ENCODE measurements at regions of chr1 and their contacts with region 1.

Region 1: DNA sequence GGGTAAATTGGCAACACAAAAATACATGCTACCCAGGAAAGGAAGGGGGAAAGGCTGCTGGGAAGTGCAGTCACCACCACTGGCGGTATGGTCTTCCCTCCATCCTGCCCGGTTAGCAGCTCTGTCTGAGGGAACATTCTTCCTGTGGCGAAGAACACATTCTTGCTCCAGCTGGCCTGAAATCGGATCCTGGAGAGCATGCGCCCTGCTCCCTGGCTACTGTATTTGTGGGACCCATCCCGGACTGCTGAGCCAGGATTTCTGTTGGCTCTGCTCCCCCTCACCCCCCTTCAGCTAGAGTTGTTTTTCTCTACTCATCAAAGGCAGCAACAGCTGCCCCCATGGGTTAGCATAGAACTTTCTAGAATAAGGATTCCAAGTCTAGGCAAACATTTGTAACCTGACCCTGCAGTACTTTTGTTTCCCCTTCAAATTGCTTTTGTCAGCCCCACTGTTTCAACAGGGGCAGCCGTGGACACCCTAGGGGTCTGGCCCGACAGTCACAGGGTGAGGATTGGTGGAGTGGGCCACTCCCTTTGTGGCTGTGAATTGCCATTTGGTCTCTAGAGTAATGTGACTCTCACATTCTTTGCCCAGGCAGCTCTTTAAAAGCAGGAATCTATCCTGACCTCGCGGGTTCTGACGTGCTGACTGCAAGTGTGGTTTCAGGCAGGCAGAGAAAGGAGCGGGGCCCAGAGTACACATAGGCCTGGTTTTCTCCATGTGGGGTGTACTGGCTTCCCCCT is 157.7 kb downstream of the TOMM20 start:
- DNase-seq: peak; percentile 83 to 93
- ATAC-seq: peak; percentile 84
- H3K4me3 ChIP-seq: peak overlapping the region; percentile 48 to 65 (median 55)
- H3K27ac ChIP-seq: peak overlapping the region; percentile 87 to 94 (median 90)
- H3K4me1 ChIP-seq: peaks cover 58 to 59% of the 10 kb centered on the region in 2 donors
- H3K27me3 ChIP-seq: no peaks in the 10 kb centered on the region
- CTCF ChIP-seq: no peak
- POLR2A ChIP-seq: peak; percentile 56 to 75

Region 2: DNA sequence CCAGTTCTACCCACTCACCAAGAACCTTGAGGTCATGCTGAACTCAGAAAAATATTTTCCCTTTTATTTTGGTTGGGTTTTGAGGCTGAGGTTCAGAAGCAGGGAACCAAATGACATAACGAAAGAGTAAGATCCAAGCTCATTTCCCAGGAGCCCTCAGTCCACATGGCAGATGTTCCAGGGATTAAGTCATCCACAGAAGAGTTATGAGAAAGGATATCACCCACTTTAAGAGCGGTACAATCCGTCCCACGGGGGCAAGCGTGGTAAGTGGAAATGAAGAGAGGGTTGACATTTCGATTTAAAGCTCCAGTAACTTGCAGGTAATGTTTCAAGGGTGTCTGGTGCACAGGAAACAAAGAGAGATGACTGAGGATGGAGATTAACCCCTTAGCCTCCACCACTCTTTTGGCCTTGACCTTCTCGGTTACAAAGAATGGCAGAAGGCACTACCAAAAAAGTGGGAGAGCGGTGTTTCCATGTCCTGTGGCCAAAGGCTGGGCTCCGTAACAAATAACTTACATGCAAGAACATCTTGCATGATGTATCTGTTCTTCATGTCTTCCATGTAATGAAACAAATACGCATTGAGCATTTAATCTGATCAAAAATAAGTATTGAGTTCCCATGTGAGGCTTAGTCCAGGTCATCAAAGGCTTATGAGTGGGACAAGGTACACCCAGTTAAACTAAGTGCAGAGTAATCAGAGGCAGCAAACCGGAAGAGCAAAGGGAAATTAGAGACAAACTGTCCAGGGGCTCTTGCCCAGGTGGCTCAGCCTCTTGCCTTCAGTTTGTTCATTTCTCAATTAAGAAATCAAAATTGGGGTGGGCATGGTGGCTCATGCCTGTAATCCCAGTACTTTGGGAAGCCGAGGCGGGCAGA is 83.6 kb before region 1 on chr1:
- in situ Hi-C with region 1: loop called in 1 of 4 experiments (anchors 25 kb)
- intact Hi-C with region 1: loop called (anchors 1 kb)
- DNase-seq: peak; percentile 59 to 82
- ATAC-seq: peak; percentile 48 to 57
- H3K4me3 ChIP-seq: peak overlapping the region in 3 of 4 donors; percentile 3 to 42 (median 18)
- H3K27ac ChIP-seq: peak overlapping the region; percentile 90 to 100 (median 96)
- H3K4me1 ChIP-seq: peaks cover 36 to 38% of the 10 kb centered on the region in 2 donors
- H3K27me3 ChIP-seq: no peaks in the 10 kb centered on the region
- CTCF ChIP-seq: no peak
- POLR2A ChIP-seq: peak in 1 of 2 donors; percentile 25

Region 3: DNA sequence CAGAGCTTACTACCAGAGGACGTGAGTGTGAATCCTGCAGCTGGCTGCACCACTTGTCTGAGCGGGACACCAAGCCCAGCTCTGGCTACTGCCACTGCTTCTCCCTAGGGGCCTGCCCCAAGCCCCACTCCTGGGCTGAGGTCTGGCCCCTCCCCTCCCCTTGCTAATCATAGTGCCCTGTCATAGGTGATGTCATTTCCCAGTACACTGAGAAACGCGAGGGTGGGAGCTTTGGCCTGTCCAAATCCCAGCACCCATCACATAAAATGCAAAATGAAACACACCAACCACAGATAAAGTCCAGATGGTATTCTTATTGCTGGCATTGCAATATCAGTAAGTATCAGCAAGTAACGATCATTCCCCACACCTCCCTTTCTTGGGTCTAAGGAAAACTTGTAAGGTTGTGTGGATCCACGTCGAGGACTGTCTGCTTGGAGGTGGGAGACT is 80.0 kb after region 1 on chr1:
- in situ Hi-C with region 1: no loop called
- intact Hi-C with region 1: no loop called
- DNase-seq: no peak
- ATAC-seq: no peak
- H3K4me3 ChIP-seq: no peak overlapping the region
- H3K27ac ChIP-seq: peak overlapping the region in 2 of 4 donors; percentile 19 to 38
- H3K4me1 ChIP-seq: peaks cover 27 to 36% of the 10 kb centered on the region in 2 donors
- H3K27me3 ChIP-seq: no peaks in the 10 kb centered on the region
- CTCF ChIP-seq: no peak
- POLR2A ChIP-seq: no peak

Measured in gastrocnemius medialis (tissue), 4 donors.